H1 (cell line): ENCODE measurements at regions of chr10 and their contacts with region 1.

Region 1: GRCh38 chr10:124708922-124709520 is 35.2 kb downstream of the FAM53B start:
- DNase-seq: no peak
- H3K4me3 ChIP-seq: no peak overlapping the region
- H3K27ac ChIP-seq: no peak overlapping the region
- H3K4me1 ChIP-seq: peaks cover 3 to 21% (median 13%) of the 10 kb centered on the region in 4 experiments; a peak in 6 of 7 replicates
- H3K27me3 ChIP-seq: no peaks in the 10 kb centered on the region
- CTCF ChIP-seq: no peak
- EP300 ChIP-seq: no peak
- POLR2A ChIP-seq: no peak
- RAD21 ChIP-seq: no peak

Region 2: GRCh38 chr10:124697830-124698544 is 11.0 kb before region 1 on chr10:
- CTCF ChIA-PET with region 1: interaction called, 13 read pairs
- POLR2A ChIA-PET with region 1: no interaction called
- DNase-seq: no peak
- H3K4me3 ChIP-seq: no peak overlapping the region
- H3K27ac ChIP-seq: no peak overlapping the region
- H3K4me1 ChIP-seq: peaks cover 0 to 4% (median 1%) of the 10 kb centered on the region in 4 experiments; a peak in 4 of 7 replicates
- H3K27me3 ChIP-seq: no peaks in the 10 kb centered on the region
- CTCF ChIP-seq: no peak
- EP300 ChIP-seq: no peak
- POLR2A ChIP-seq: no peak
- RAD21 ChIP-seq: no peak

Region 3: GRCh38 chr10:124724279-124725027 is 15.4 kb after region 1 on chr10:
- CTCF ChIA-PET with region 1: interaction called, 31 read pairs
- POLR2A ChIA-PET with region 1: no interaction called
- DNase-seq: no peak
- H3K4me3 ChIP-seq: no peak overlapping the region
- H3K27ac ChIP-seq: no peak overlapping the region
- H3K4me1 ChIP-seq: peaks cover 0 to 4% (median under 1%) of the 10 kb centered on the region in 4 experiments; a peak in 4 of 7 replicates
- H3K27me3 ChIP-seq: no peaks in the 10 kb centered on the region
- CTCF ChIP-seq: peak in 2 of 3 experiments; percentile 11 to 18; a peak in 2 of 4 replicates
- EP300 ChIP-seq: no peak
- POLR2A ChIP-seq: no peak
- RAD21 ChIP-seq: no peak